PC-9 (cell line): ENCODE measurements at regions of chr3 and their contacts with region 1.

Region 1: DNA sequence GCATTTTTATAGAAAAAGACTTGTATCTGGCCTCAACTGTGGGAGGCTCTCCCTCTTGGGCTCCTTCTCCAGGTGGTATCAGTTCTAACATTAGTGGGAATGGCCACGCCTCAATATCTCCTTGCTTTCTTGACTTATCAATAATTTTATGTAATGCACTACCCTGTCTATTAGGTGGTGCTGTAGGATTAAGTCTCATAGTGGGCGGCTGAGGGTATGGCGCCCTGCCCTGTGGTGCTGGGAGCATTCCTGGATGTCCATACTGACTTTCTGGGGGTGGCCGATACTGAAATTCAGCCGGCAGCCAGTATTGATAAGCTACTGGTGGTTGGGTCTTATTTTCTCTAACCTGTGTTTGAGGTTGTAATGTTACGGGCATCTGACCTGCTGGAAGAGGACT is 8.7 kb upstream of the RPUSD3 start:
- DNase-seq: no peak
- H3K4me3 ChIP-seq: no peak overlapping the region
- H3K27ac ChIP-seq: no peak overlapping the region
- H3K4me1 ChIP-seq: 0 out of 2 replicates have a peak, but pooled peaks cover 8% of the 10 kb centered on the region
- H3K27me3 ChIP-seq: no peaks in the 10 kb centered on the region
- CTCF ChIP-seq: 0 out of 2 replicates have a peak, but pooled peaks have one; percentile 17

Region 2: GRCh38 chr3:9736831-9737230 is 115.7 kb before region 1 on chr3:
- CTCF ChIA-PET with region 1: no interaction called
- POLR2A ChIA-PET with region 1: no interaction called
- intact Hi-C with region 1: no loop called
- DNase-seq: no peak
- H3K4me3 ChIP-seq: no peak overlapping the region
- H3K27ac ChIP-seq: no peak overlapping the region
- H3K4me1 ChIP-seq: peaks cover 13% of the 10 kb centered on the region
- H3K27me3 ChIP-seq: no peaks in the 10 kb centered on the region
- CTCF ChIP-seq: no peak

Region 3: GRCh38 chr3:9864200-9864927 is 11.8 kb after region 1 on chr3:
- CTCF ChIA-PET with region 1: interaction called, 10 read pairs
- POLR2A ChIA-PET with region 1: no interaction called
- intact Hi-C with region 1: no loop called
- DNase-seq: peak; percentile 50 to 80
- H3K4me3 ChIP-seq: peak overlapping the region; percentile 39; the same call in 1 of the 2 replicates
- H3K27ac ChIP-seq: peak overlapping the region; percentile 64
- H3K4me1 ChIP-seq: peaks cover 43% of the 10 kb centered on the region
- H3K27me3 ChIP-seq: no peaks in the 10 kb centered on the region
- CTCF ChIP-seq: no peak